OCI-LY7 (cell line): ENCODE measurements at regions of chr4 and their contacts with region 1.

Region 1: DNA sequence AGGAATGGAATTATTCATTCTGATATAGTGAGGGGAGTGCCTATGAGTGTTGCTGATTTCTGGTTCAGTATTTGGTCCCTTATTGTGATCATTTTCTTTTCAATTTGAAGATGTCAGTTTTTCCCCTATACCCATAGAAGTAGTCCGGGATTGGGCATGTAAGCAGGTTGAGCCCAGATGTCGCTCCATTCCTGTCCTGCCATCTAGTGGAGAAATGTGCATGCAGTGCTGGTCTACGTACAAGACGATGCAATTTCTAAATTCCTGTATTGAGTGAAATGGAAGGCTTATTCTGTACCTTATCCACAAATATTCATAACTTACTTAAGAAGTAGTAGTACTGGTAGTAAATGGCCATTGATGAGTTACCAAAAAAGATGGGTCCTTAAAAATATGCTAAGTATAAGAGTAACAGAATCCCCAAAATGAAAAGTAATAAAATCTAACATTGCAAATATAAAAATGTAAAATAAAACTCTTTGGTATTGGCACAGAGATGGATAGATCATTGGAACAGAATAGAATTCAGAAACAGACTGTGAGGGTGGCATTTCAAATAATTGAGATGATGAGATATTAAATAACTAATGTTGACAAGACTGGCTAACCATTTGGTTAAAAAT is 60.9 kb downstream of the UGT8 start:
- DNase-seq: peak; percentile 80
- H3K4me3 ChIP-seq: no peak overlapping the region
- H3K27ac ChIP-seq: no peak overlapping the region
- H3K4me1 ChIP-seq: no peaks in the 10 kb centered on the region
- CTCF ChIP-seq: peak; percentile 100

Region 2: GRCh38 chr4:114509340-114509739 is 150.2 kb before region 1 on chr4:
- CTCF ChIA-PET with region 1: no interaction called
- POLR2A ChIA-PET with region 1: no interaction called
- intact Hi-C with region 1: loop called (anchors 5 kb)
- DNase-seq: no peak
- H3K4me3 ChIP-seq: no peak overlapping the region
- H3K27ac ChIP-seq: no peak overlapping the region
- H3K4me1 ChIP-seq: no peaks in the 10 kb centered on the region
- CTCF ChIP-seq: no peak; the same call in 1 of the 2 replicates

Region 3: DNA sequence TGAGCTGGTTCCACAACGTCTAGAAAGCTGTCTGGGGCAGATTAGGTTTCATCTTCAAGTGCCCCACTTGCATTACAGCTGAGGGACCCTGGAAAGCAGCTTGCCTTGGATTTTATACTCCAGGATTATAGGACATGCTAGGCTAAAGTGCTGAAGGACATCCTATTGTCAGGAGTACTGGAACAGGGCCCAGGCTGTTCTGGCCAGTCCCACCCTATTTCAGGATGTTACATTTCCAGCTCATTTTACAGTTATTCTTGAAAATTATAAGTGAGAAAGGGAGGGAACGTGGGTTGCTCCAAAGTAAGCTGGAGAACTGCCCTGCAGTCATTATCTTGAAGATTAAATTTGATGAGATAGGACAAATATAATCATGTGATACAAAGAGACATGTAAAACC is 131.9 kb before region 1 on chr4:
- CTCF ChIA-PET with region 1: no interaction called
- POLR2A ChIA-PET with region 1: no interaction called
- intact Hi-C with region 1: no loop called
- DNase-seq: no peak
- H3K4me3 ChIP-seq: no peak overlapping the region
- H3K27ac ChIP-seq: no peak overlapping the region
- H3K4me1 ChIP-seq: no peaks in the 10 kb centered on the region
- CTCF ChIP-seq: no peak

Region 4: GRCh38 chr4:114598191-114599121 is 61.0 kb before region 1 on chr4 and contains the start of gene UGT8:
- CTCF ChIA-PET with region 1: interaction called, 3 read pairs
- POLR2A ChIA-PET with region 1: interaction called, 3 read pairs
- intact Hi-C with region 1: loop called (anchors 1 kb)
- DNase-seq: peak; percentile 82
- H3K4me3 ChIP-seq: peak within 1 kb of the TSS; percentile 93
- H3K27ac ChIP-seq: peak within 1 kb of the TSS; percentile 36
- H3K4me1 ChIP-seq: peaks cover 33% of the 10 kb centered on the region
- CTCF ChIP-seq: no peak
- total RNA-seq, gene UGT8: 17.5 and 19.0 TPM in 2 replicates

Region 5: GRCh38 chr4:114694770-114695169 is 35.3 kb after region 1 on chr4:
- CTCF ChIA-PET with region 1: no interaction called
- POLR2A ChIA-PET with region 1: interaction called, 4 read pairs
- intact Hi-C with region 1: loop called (anchors 2 kb)
- DNase-seq: peak; percentile 61
- H3K4me3 ChIP-seq: no peak overlapping the region
- H3K27ac ChIP-seq: no peak overlapping the region
- H3K4me1 ChIP-seq: no peaks in the 10 kb centered on the region
- CTCF ChIP-seq: peak; percentile 89